ENCODE measurements at regions of chr7 and their contacts with region 1.

Region 1: GRCh38 chr7:16695621-16696237 is 49.7 kb downstream of the BZW2 start:
- DNase-seq: no peak
- ATAC-seq: no peak
- H3K4me3 ChIP-seq: no peak overlapping the region
- H3K27ac ChIP-seq: no peak overlapping the region
- H3K4me1 ChIP-seq: peaks cover 4 to 5% of the 10 kb centered on the region in 2 donors
- H3K27me3 ChIP-seq: no peaks in the 10 kb centered on the region

Region 2: GRCh38 chr7:16450366-16450765 is 245.4 kb before region 1 on chr7:
- intact Hi-C with region 1: no loop called
- DNase-seq: no peak
- ATAC-seq: no peak
- H3K4me3 ChIP-seq: no peak overlapping the region
- H3K27ac ChIP-seq: no peak overlapping the region
- H3K4me1 ChIP-seq: no peaks in the 10 kb centered on the region
- H3K27me3 ChIP-seq: no peaks in the 10 kb centered on the region

Region 3: GRCh38 chr7:16811551-16811950 is 115.8 kb after region 1 on chr7:
- intact Hi-C with region 1: loop called in 1 of 2 experiments (anchors 5 kb)
- DNase-seq: no peak
- ATAC-seq: no peak
- H3K4me3 ChIP-seq: no peak overlapping the region
- H3K27ac ChIP-seq: no peak overlapping the region
- H3K4me1 ChIP-seq: no peaks in the 10 kb centered on the region
- H3K27me3 ChIP-seq: no peaks in the 10 kb centered on the region

Region 4: GRCh38 chr7:16951483-16952080 is 255.9 kb after region 1 on chr7:
- intact Hi-C with region 1: no loop called
- DNase-seq: no peak
- ATAC-seq: no peak
- H3K4me3 ChIP-seq: no peak overlapping the region
- H3K27ac ChIP-seq: no peak overlapping the region
- H3K4me1 ChIP-seq: peaks cover 0 to 3% of the 10 kb centered on the region in 2 donors
- H3K27me3 ChIP-seq: no peaks in the 10 kb centered on the region

Measured in aorta (tissue), 5 donors.